Heart left ventricle (tissue), 16 donors: ENCODE measurements at regions of chr5 and their contacts with region 1.

Region 1: GRCh38 chr5:140145818-140146522 is 20.2 kb downstream of the IGIP start:
- DNase-seq: peak; percentile 75 to 88 (median 79)
- ATAC-seq: peak; percentile 66 to 95 (median 94)
- H3K4me3 ChIP-seq: peak overlapping the region; percentile 15 to 61 (median 50)
- H3K27ac ChIP-seq: peak overlapping the region in 3 of 12 donors; percentile 3 to 26 (median 13)
- H3K4me1 ChIP-seq: peaks cover 0 to 27% (median 17%) of the 10 kb centered on the region in 12 donors
- H3K27me3 ChIP-seq: peaks cover 0 to 11% (median 0%) of the 10 kb centered on the region in 9 donors
- CTCF ChIP-seq: peak; percentile 59 to 91 (median 80)
- POLR2A ChIP-seq: no peak

Region 2: GRCh38 chr5:139795074-139796001 is 350.6 kb before region 1 on chr5 and contains the start of gene PSD2:
- intact Hi-C with region 1: loop called in 1 of 10 experiments (anchors 10 kb)
- DNase-seq: no peak
- ATAC-seq: peak in 2 of 4 donors; percentile 27 to 44
- H3K4me3 ChIP-seq: peak within 1 kb of the TSS; percentile 20 to 57 (median 42)
- H3K27ac ChIP-seq: no peak within 1 kb of the TSS
- H3K4me1 ChIP-seq: peaks cover 0 to 14% (median 6%) of the 10 kb centered on the region in 12 donors
- H3K27me3 ChIP-seq: peaks cover 18 to 56% (median 38%) of the 10 kb centered on the region in 9 donors
- CTCF ChIP-seq: no peak
- POLR2A ChIP-seq: no peak
- total RNA-seq, gene PSD2: 0.04 to 0.11 TPM in 2 of 9 donors, not detected in the others

Region 3: GRCh38 chr5:139974661-139975060 is 171.3 kb before region 1 on chr5:
- intact Hi-C with region 1: loop called in 1 of 10 experiments (anchors 10 kb)
- DNase-seq: peak in 1 of 5 donors; percentile 6
- ATAC-seq: peak in 2 of 4 donors; percentile 12 to 29
- H3K4me3 ChIP-seq: no peak overlapping the region
- H3K27ac ChIP-seq: no peak overlapping the region
- H3K4me1 ChIP-seq: peaks cover 0 to 30% (median 7%) of the 10 kb centered on the region in 12 donors
- H3K27me3 ChIP-seq: no peaks in the 10 kb centered on the region
- CTCF ChIP-seq: no peak
- POLR2A ChIP-seq: no peak

Region 4: GRCh38 chr5:140073296-140073695 is 72.7 kb before region 1 on chr5:
- intact Hi-C with region 1: loop called in 8 of 10 experiments (anchors 1 to 5 kb)
- DNase-seq: no peak
- ATAC-seq: no peak
- H3K4me3 ChIP-seq: peak overlapping the region in 2 of 12 donors; percentile 2 to 10
- H3K27ac ChIP-seq: no peak overlapping the region
- H3K4me1 ChIP-seq: peaks cover 0 to 3% (median 0%) of the 10 kb centered on the region in 12 donors
- H3K27me3 ChIP-seq: peaks cover 0 to 4% (median 0%) of the 10 kb centered on the region in 9 donors
- CTCF ChIP-seq: peak; percentile 47 to 83 (median 74)
- POLR2A ChIP-seq: no peak

Region 5: GRCh38 chr5:140107312-140108083 is 38.5 kb before region 1 on chr5:
- intact Hi-C with region 1: loop called in 4 of 10 experiments (anchors 5 kb)
- DNase-seq: peak; percentile 94 to 97 (median 95)
- ATAC-seq: peak; percentile 92 to 98 (median 98)
- H3K4me3 ChIP-seq: peak overlapping the region; percentile 41 to 87 (median 74)
- H3K27ac ChIP-seq: peak overlapping the region; percentile 95 to 100 (median 98)
- H3K4me1 ChIP-seq: peaks cover under 1 to 52% (median 28%) of the 10 kb centered on the region in 12 donors
- H3K27me3 ChIP-seq: peaks cover 0 to 12% (median 0%) of the 10 kb centered on the region in 9 donors
- CTCF ChIP-seq: peak in 9 of 12 donors; percentile 17 to 52 (median 39)
- POLR2A ChIP-seq: peak; percentile 5 to 89

Region 6: GRCh38 chr5:140113699-140114263 is 32.2 kb before region 1 on chr5 and contains the start of gene PURA:
- intact Hi-C with region 1: loop called in 6 of 10 experiments (anchors 2 to 5 kb)
- DNase-seq: peak; percentile 96 to 98 (median 97)
- ATAC-seq: peak; percentile 85 to 96 (median 95)
- H3K4me3 ChIP-seq: peak within 1 kb of the TSS; percentile 53 to 95 (median 80)
- H3K27ac ChIP-seq: peak within 1 kb of the TSS; percentile 86 to 95 (median 91)
- H3K4me1 ChIP-seq: peaks cover 13 to 85% (median 64%) of the 10 kb centered on the region in 12 donors
- H3K27me3 ChIP-seq: peaks cover 0 to 14% (median 0%) of the 10 kb centered on the region in 9 donors
- CTCF ChIP-seq: peak in 8 of 12 donors; percentile 6 to 47 (median 34)
- POLR2A ChIP-seq: peak in 1 of 2 donors; percentile 66
- total RNA-seq, gene PURA: 18.9 to 30.9 (median 20.3) TPM

Region 7: GRCh38 chr5:140564196-140565023 is 418.4 kb after region 1 on chr5 and contains the starts of genes APBB3 and SLC35A4:
- intact Hi-C with region 1: no loop called
- DNase-seq: peak; percentile 96 to 98 (median 98)
- ATAC-seq: peak; percentile 94 to 96 (median 94)
- H3K4me3 ChIP-seq: peak within 1 kb of the TSS; percentile 57 to 89 (median 76)
- H3K27ac ChIP-seq: peak within 1 kb of the TSS; percentile 90 to 97 (median 94)
- H3K4me1 ChIP-seq: peaks cover 9 to 64% (median 45%) of the 10 kb centered on the region in 12 donors
- H3K27me3 ChIP-seq: no peaks in the 10 kb centered on the region
- CTCF ChIP-seq: no peak
- POLR2A ChIP-seq: peak in 1 of 2 donors; percentile 83
- total RNA-seq, gene APBB3: 3.6 to 23.1 (median 11.4) TPM
- total RNA-seq, gene SLC35A4: 55.5 to 92.1 (median 75.9) TPM